ENCODE measurements at regions of chr15 and their contacts with region 1.

Region 1: GRCh38 chr15:53710906-53711305 is 48.6 kb downstream of the WDR72 start:
- DNase-seq: no peak
- ATAC-seq: no peak
- H3K4me3 ChIP-seq: no peak overlapping the region
- H3K27ac ChIP-seq: no peak overlapping the region
- H3K4me1 ChIP-seq: no peaks in the 10 kb centered on the region
- H3K27me3 ChIP-seq: peaks cover 0 to 3% (median 0%) of the 10 kb centered on the region in 9 donors
- CTCF ChIP-seq: no peak
- POLR2A ChIP-seq: no peak

Region 2: DNA sequence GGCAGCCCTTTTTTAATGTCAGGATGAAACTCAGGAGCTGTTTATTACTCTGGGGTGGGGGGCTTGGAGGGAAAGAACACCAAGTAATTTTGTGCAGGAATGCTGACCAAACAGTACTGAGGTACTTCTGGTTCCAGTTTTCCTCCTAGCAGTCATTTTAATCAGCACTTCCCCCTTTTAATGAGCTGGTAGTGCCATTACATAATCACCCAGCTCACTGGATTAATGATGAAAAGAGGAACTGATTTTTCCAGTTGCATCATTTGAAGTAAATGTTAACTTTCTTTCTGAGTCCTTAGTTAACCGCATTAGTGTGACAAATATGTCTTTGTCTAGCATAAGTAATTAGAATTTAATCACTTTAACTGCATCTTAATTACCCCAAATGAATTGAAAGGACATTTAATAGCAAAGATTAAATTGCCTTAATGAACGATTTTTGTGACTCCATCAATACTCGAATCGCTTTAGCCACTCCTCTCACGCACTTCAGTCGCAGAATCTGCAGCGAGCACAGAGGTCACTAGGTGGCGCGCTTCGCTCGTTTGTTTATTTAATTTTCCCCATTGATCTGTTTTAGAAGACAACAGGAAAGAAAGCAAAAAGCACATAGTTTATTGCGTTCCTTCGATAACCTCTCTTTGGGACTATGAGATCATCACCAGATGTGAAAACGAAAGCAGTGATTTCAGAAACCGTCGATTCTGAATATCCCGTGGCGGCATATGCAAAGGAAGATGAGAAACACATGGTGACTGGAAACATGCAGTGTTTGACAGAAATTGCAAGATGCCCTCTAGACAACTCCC is 930.5 kb before region 1 on chr15:
- intact Hi-C with region 1: loop called in 9 of 10 experiments (anchors 1 to 10 kb)
- DNase-seq: peak in 1 of 5 donors; percentile 47
- ATAC-seq: peak; percentile 17 to 61 (median 42)
- H3K4me3 ChIP-seq: peak overlapping the region in 4 of 12 donors; percentile 1 to 30 (median 16)
- H3K27ac ChIP-seq: peak overlapping the region in 1 of 12 donors; percentile 45
- H3K4me1 ChIP-seq: peaks cover 0 to 41% (median 6%) of the 10 kb centered on the region in 12 donors
- H3K27me3 ChIP-seq: peaks cover 37 to 95% (median 69%) of the 10 kb centered on the region in 9 donors
- CTCF ChIP-seq: peak; percentile 73 to 95 (median 84)
- POLR2A ChIP-seq: no peak